Prostate gland (tissue), 2 donors: ENCODE measurements at regions of chr20 and their contacts with region 1.

Region 1: DNA sequence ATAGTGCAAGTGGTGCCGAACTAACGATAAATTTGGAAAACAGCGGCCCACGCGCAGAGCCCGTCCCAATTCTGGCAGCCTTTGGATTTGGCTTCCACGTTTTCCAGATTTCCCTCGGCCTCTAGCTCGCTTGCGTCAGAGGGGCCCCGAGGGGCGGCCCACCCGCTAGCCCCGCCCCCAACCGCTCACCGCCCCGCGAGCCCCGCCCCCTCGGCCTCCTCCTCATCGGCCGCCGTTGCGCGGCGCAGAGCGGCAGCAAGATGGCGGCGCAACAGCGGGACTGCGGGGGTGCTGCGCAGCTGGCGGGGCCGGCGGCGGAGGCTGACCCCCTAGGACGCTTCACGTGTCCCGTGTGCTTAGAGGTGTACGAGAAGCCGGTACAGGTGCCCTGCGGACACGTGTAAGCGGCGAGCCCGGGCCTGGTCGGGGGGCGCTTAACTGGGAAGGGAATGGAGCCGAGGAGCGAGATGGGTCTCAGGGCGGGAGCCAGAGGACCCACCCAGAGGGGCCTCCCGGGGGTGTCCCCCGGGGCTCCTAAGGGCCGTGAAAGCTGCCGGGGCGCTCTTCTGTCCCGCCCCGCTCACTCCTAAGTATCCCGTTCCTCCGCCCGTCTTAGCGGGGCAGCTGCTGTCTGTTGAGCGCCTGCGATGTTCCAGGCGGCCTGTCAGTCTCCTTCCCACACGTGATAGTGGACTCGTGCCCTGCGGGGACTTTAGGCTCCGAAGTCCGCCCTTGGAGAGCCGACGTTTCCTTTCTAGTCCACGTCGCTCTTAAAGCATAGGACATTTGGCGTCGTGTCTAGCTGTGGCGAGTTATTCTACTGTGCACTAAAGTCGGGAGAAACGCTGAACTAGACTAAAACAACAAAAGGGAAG is at the start of gene RNF114:
- DNase-seq: peak; percentile 91
- H3K4me3 ChIP-seq: peak within 1 kb of the TSS; percentile 94 to 95
- H3K27ac ChIP-seq: peak within 1 kb of the TSS; percentile 93 to 94
- H3K4me1 ChIP-seq: peaks cover 19% of the 10 kb centered on the region
- H3K27me3 ChIP-seq: no peaks in the 10 kb centered on the region
- CTCF ChIP-seq: peak in 2 of 4 experiments; percentile 9 to 23
- POLR2A ChIP-seq: peak; percentile 91
- total RNA-seq, gene RNF114: 166 to 239 TPM

Region 2: GRCh38 chr20:49729721-49730138 is 206.7 kb before region 1 on chr20:
- intact Hi-C with region 1: no loop called
- DNase-seq: no peak
- H3K4me3 ChIP-seq: no peak overlapping the region
- H3K27ac ChIP-seq: no peak overlapping the region
- H3K4me1 ChIP-seq: no peaks in the 10 kb centered on the region
- H3K27me3 ChIP-seq: no peaks in the 10 kb centered on the region
- CTCF ChIP-seq: no peak
- POLR2A ChIP-seq: no peak

Region 3: DNA sequence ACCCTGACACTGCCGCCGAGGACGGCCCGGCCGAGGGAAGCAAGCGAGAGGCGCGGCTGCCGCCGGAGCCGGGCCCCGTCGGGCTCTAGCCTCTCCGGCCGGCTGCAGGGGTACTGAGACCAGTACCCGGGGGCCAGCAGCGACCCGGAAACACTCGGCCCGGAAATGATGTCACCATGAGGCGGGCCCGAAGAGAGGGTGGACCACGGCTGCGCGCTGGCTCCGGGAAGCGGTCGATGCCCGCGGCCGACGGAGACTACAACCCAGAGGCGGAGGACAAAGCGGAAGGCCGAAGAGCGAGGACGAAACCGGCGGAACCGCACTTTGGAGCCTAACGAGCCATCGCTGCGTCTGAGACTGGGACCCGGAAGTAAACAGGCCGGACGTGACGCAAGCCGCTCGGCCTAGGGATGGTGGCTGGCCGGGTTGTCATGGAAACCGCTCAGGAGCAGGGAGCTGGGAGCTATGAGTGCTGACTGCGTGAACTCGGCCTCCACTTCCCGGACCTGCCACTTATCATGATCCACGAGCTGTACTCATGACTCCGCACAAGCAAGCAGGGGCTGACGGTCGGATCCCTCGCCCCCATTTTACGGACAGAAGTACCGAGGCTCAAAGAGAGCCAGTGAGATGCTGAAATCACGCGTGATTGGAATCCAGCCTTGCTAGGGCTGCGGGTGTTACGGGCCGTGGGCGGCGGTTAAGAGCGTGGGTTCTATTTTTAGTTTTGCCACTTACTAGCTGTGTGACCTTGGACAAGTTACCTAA is 20.8 kb before region 1 on chr20 and contains the start of gene SPATA2:
- intact Hi-C with region 1: loop called (anchors 1 kb)
- DNase-seq: peak; percentile 93
- H3K4me3 ChIP-seq: peak within 1 kb of the TSS; percentile 99
- H3K27ac ChIP-seq: peak within 1 kb of the TSS; percentile 99
- H3K4me1 ChIP-seq: peaks cover 13% of the 10 kb centered on the region
- H3K27me3 ChIP-seq: no peaks in the 10 kb centered on the region
- CTCF ChIP-seq: no peak
- POLR2A ChIP-seq: peak; percentile 62
- total RNA-seq, gene SPATA2: 9.2 to 15.2 TPM